ENCODE measurements at regions of chr13 and their contacts with region 1.

Region 1: GRCh38 chr13:22944378-22944777 is 236.4 kb upstream of the SGCG start:
- DNase-seq: no peak
- ATAC-seq: no peak
- H3K4me3 ChIP-seq: no peak overlapping the region
- H3K27ac ChIP-seq: no peak overlapping the region
- H3K4me1 ChIP-seq: no peaks in the 10 kb centered on the region
- H3K27me3 ChIP-seq: peaks cover 0 to 13% (median 0%) of the 10 kb centered on the region in 9 donors
- CTCF ChIP-seq: no peak
- POLR2A ChIP-seq: no peak

Region 2: GRCh38 chr13:24360106-24360505 is 1415.7 kb after region 1 on chr13:
- intact Hi-C with region 1: loop called in 2 of 10 experiments (anchors 10 kb)
- DNase-seq: no peak
- ATAC-seq: no peak
- H3K4me3 ChIP-seq: no peak overlapping the region
- H3K27ac ChIP-seq: no peak overlapping the region
- H3K4me1 ChIP-seq: no peaks in the 10 kb centered on the region
- H3K27me3 ChIP-seq: no peaks in the 10 kb centered on the region
- CTCF ChIP-seq: no peak
- POLR2A ChIP-seq: no peak